ENCODE measurements at regions of chr5 and their contacts with region 1.

Region 1: GRCh38 chr5:83076742-83077661 is at the starts of genes TMEM167A and XRCC4:
- DNase-seq: peak; percentile 96
- ATAC-seq: peak; percentile 98
- H3K4me3 ChIP-seq: peak within 1 kb of the TSS; percentile 87
- H3K27ac ChIP-seq: peak within 1 kb of the TSS; percentile 94
- H3K4me1 ChIP-seq: no peaks in the 10 kb centered on the region
- H3K27me3 ChIP-seq: no peaks in the 10 kb centered on the region
- CTCF ChIP-seq: no peak
- EP300 ChIP-seq: no peak; a peak in 1 of 4 replicates
- POLR2A ChIP-seq: peak; percentile 99
- RAD21 ChIP-seq: peak; percentile 6; the same call in 1 of the 2 replicates
- polyA plus RNA-seq, gene TMEM167A: 314 to 363 TPM
- polyA plus RNA-seq, gene XRCC4: 49.2 to 53.6 TPM

Region 2: DNA sequence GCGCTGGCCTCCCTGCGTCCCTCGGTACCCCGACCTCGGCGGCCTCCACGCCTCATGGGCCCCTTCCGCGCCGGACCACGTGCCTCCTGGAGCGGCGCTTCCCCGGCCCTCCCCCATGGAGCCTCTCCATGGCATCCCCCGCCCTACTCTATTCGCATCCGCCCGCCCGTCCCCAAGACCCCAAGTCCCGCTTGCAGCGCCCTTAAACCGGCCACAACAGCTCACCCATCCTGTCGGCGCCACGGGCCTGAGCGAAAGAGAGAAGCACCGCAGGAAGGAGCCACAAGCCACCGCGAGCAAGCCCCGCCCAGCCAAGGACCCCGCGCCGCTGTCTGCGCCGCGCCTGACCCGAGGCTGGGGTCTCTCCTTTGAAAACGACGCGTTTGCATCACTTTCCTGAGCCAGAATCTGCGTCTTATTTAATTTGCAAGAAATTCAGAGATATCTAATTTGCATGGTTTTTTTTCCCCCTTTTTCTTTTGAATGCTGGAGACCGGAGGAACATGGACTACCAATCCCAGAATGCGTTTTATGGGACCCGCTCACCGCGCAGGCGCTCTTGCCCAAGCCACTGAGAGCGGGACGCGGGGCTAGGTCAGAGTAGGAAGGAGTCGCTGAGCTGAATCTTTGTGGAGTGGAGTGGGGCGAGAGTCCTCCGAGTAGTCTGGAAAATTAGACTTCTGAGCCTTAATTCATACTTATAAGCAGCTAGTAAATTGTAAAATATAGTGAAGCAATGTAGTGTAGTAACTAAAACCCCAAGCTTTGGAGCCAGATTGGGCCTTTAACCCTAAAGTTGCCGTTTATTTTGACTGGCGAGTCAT is 798.7 kb before region 1 on chr5 and contains the start of gene RPS23:
- CTCF ChIA-PET with region 1: no interaction called
- POLR2A ChIA-PET with region 1: no interaction called
- RAD21 ChIA-PET with region 1: no interaction called
- SMC1A ChIA-PET with region 1: no interaction called
- in situ Hi-C with region 1: no loop called
- intact Hi-C with region 1: loop called (anchors 10 kb)
- DNase-seq: peak; percentile 74
- ATAC-seq: peak; percentile 88
- H3K4me3 ChIP-seq: peak within 1 kb of the TSS; percentile 82
- H3K27ac ChIP-seq: peak within 1 kb of the TSS; percentile 96
- H3K4me1 ChIP-seq: peaks cover 8% of the 10 kb centered on the region
- H3K27me3 ChIP-seq: no peaks in the 10 kb centered on the region
- CTCF ChIP-seq: no peak
- EP300 ChIP-seq: no peak; a peak in 1 of 4 replicates
- POLR2A ChIP-seq: peak; percentile 99
- RAD21 ChIP-seq: no peak
- polyA plus RNA-seq, gene RPS23: 6,503 to 7,117 TPM

Region 3: GRCh38 chr5:83368319-83368718 is 291.3 kb after region 1 on chr5:
- CTCF ChIA-PET with region 1: no interaction called
- POLR2A ChIA-PET with region 1: interaction called, 3 read pairs
- RAD21 ChIA-PET with region 1: no interaction called
- SMC1A ChIA-PET with region 1: no interaction called
- in situ Hi-C with region 1: no loop called
- intact Hi-C with region 1: loop called (anchors 10 kb)
- DNase-seq: no peak
- ATAC-seq: peak; percentile 53
- H3K4me3 ChIP-seq: no peak overlapping the region
- H3K27ac ChIP-seq: no peak overlapping the region
- H3K4me1 ChIP-seq: peaks cover 13% of the 10 kb centered on the region; the same call in 1 of the 2 replicates
- H3K27me3 ChIP-seq: no peaks in the 10 kb centered on the region
- CTCF ChIP-seq: no peak
- EP300 ChIP-seq: no peak
- POLR2A ChIP-seq: no peak
- RAD21 ChIP-seq: no peak

Measured in GM12878 (cell line).